WTC11 (cell line): ENCODE measurements at regions of chr3 and their contacts with region 1.

Region 1: DNA sequence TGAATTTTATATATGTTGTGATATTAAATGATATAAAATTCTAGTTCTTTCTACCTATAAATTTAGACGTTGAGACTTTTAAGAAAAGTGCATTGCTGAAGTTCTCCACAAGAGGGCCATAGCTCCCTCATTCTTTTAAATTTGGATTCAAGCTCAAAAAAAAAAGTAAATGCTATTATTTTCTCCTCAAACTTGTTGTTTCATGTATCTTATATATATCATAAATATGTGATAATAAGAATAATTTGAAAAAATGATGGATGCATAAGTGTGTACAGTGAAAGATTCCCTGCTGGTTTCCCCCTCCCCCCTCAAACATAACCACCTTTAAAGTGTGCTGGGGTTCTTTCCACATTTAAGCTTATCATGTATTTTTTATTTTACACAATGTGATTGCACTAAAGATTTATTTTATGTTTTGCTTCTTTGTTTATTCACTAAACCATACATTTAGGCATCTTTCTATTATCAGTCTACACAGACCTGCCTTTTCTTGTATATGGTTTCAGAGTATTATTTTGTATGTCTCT is 769.4 kb upstream of the GOLIM4 start:
- DNase-seq: no peak
- ATAC-seq: no peak
- H3K4me3 Mint-ChIP-seq: no peak overlapping the region
- H3K27ac Mint-ChIP-seq: no peak overlapping the region
- H3K4me1 Mint-ChIP-seq: peaks cover 8% of the 10 kb centered on the region
- H3K27me3 Mint-ChIP-seq: no peaks in the 10 kb centered on the region
- CTCF ChIP-seq: peak; percentile 68

Region 2: DNA sequence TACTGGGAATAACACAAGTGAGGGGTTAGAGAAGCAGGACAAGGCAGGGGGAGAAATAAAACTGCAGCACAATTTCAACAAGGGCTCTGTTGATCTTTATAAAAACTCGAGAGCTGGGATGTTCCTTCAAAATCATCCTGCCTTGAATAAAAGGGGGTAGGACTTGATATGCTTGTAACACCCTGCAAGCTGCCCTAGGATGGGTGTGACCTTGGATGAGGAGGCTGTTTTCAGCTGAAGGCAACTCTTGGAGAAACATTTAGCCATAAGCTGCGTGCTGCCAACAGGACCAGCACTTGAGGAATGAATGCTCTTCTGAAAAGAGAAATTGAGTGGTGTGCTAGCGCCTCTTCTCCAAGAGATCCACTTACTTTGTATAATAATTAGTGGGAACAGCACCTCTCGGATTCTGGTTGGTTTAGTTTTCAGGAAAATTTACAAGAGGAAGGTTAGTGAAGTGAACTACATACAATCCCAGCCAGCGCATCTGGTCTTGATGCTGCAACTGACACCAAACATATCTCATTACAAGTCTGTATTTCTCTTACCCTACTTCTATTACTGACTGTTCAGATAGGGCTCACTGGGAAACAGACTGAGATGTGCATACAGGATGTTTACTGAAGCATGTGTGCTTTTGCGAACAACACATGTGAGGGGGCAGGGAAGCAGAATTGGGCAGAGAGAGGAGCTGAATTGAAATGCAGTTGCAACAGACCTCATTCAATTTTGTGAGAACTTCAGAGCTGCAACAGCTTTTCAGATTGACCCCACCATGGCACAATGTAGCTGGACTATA is 126.4 kb before region 1 on chr3:
- CTCF ChIA-PET with region 1: no interaction called
- POLR2A ChIA-PET with region 1: no interaction called
- DNase-seq: no peak
- ATAC-seq: peak; percentile 20; the same call in 1 of the 2 replicates
- H3K4me3 Mint-ChIP-seq: no peak overlapping the region
- H3K27ac Mint-ChIP-seq: no peak overlapping the region
- H3K4me1 Mint-ChIP-seq: peaks cover 12% of the 10 kb centered on the region
- H3K27me3 Mint-ChIP-seq: no peaks in the 10 kb centered on the region
- CTCF ChIP-seq: no peak

Region 3: DNA sequence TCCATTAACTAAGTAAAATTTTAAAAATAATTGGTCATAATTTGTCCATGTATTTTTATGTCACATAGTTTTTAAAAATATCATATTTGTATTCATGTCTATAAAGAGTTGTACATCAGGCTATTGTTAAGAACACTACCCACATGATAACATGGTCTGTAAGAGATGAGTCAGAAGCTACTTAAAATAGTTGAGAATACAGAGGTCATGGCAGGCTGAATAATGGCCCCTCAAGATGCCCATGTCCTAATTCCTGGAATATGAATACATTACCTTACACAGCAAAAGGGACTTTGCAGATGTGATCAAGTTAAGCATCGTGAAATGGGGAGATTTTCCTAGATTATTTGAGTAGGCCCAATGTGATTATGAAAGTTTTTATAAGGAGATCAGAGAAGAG is 13.6 kb after region 1 on chr3:
- CTCF ChIA-PET with region 1: interaction called, 14 read pairs
- POLR2A ChIA-PET with region 1: interaction called, 3 read pairs
- DNase-seq: no peak
- ATAC-seq: no peak
- H3K4me3 Mint-ChIP-seq: no peak overlapping the region
- H3K27ac Mint-ChIP-seq: no peak overlapping the region
- H3K4me1 Mint-ChIP-seq: peaks cover 44% of the 10 kb centered on the region
- H3K27me3 Mint-ChIP-seq: no peaks in the 10 kb centered on the region
- CTCF ChIP-seq: no peak

Region 4: GRCh38 chr3:168933614-168934013 is 68.5 kb after region 1 on chr3:
- CTCF ChIA-PET with region 1: no interaction called
- POLR2A ChIA-PET with region 1: no interaction called
- DNase-seq: no peak
- ATAC-seq: no peak
- H3K4me3 Mint-ChIP-seq: no peak overlapping the region
- H3K27ac Mint-ChIP-seq: no peak overlapping the region
- H3K4me1 Mint-ChIP-seq: peaks cover 11% of the 10 kb centered on the region
- H3K27me3 Mint-ChIP-seq: peaks cover 4% of the 10 kb centered on the region; the same call in 1 of the 2 replicates
- CTCF ChIP-seq: no peak